AG04449 (cell line): ENCODE measurements at regions of chr3 and their contacts with region 1.

Region 1: DNA sequence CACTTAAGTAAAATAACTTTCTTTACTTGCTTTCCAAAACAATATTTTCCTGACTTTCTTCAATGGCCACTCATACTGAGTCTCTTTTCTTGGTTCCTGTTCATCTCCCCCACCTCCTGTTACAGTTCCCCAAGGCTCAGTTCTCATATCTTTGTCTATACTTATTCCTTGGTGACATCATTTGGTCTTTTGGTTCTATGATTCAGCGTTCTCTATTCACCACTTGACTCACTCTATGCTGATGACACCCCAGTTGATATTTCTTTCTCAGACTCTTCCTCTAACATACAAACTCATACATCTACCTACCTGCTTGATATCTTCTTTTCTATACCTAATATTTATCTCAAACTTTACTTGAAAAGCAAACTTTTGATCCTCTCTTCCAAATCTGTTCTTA is 85.0 kb upstream of the P3H2 start:
- DNase-seq: no peak
- H3K4me3 ChIP-seq: no peak overlapping the region
- CTCF ChIP-seq: no peak

Region 2: GRCh38 chr3:189841473-189842210 is 364.1 kb before region 1 on chr3:
- CTCF ChIA-PET with region 1: no interaction called
- POLR2A ChIA-PET with region 1: no interaction called
- DNase-seq: peak; percentile 47
- H3K4me3 ChIP-seq: no peak overlapping the region
- CTCF ChIP-seq: no peak

Region 3: GRCh38 chr3:189981668-189982067 is 224.1 kb before region 1 on chr3:
- CTCF ChIA-PET with region 1: interaction called, 10 read pairs
- POLR2A ChIA-PET with region 1: no interaction called
- DNase-seq: peak; percentile 93
- H3K4me3 ChIP-seq: no peak overlapping the region
- CTCF ChIP-seq: no peak

Region 4: DNA sequence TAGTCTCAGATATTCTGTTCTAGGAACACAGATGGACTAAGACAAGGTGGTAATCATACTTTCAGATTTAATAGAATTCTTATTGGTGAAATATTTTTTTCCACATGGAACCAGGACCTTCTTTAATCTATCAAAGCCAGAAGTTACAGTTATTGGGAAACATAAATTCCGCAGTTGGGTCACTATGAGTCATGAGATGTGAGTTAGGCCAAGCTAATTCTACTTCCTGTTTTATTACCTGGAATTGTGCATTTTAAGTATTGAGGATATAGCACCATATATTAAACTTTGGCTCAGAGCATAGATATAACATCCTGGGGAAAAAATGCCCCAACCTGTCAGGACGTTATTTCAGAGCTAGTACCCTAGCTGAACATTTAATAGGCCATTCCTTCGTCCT is 11.3 kb after region 1 on chr3:
- CTCF ChIA-PET with region 1: interaction called, 10 read pairs
- POLR2A ChIA-PET with region 1: no interaction called
- DNase-seq: no peak
- H3K4me3 ChIP-seq: no peak overlapping the region
- CTCF ChIP-seq: no peak

Region 5: GRCh38 chr3:190886945-190887344 is 681.2 kb after region 1 on chr3:
- CTCF ChIA-PET with region 1: no interaction called
- POLR2A ChIA-PET with region 1: no interaction called
- DNase-seq: no peak
- H3K4me3 ChIP-seq: no peak overlapping the region
- CTCF ChIP-seq: no peak

Region 6: GRCh38 chr3:190902292-190902691 is 696.6 kb after region 1 on chr3:
- CTCF ChIA-PET with region 1: no interaction called
- POLR2A ChIA-PET with region 1: no interaction called
- DNase-seq: no peak
- H3K4me3 ChIP-seq: no peak overlapping the region
- CTCF ChIP-seq: no peak

Region 7: GRCh38 chr3:191094057-191094845 is 888.5 kb after region 1 on chr3:
- CTCF ChIA-PET with region 1: no interaction called
- POLR2A ChIA-PET with region 1: no interaction called
- DNase-seq: peak; percentile 74
- H3K4me3 ChIP-seq: no peak overlapping the region
- CTCF ChIP-seq: no peak